ENCODE measurements at regions of chr20 and their contacts with region 1.

Region 1: GRCh38 chr20:43448748-43449535 is 8.8 kb upstream of the SRSF6 start:
- DNase-seq: peak; percentile 72 to 78
- H3K4me3 ChIP-seq: no peak overlapping the region
- H3K4me3 Mint-ChIP-seq: no peak overlapping the region
- H3K27ac Mint-ChIP-seq: no peak overlapping the region
- H3K4me1 ChIP-seq: no peaks in the 10 kb centered on the region
- H3K4me1 Mint-ChIP-seq: no peaks in the 10 kb centered on the region
- H3K27me3 ChIP-seq: no peaks in the 10 kb centered on the region
- H3K27me3 Mint-ChIP-seq: peaks cover 2% of the 10 kb centered on the region
- CTCF ChIP-seq: peak; percentile 95

Region 2: DNA sequence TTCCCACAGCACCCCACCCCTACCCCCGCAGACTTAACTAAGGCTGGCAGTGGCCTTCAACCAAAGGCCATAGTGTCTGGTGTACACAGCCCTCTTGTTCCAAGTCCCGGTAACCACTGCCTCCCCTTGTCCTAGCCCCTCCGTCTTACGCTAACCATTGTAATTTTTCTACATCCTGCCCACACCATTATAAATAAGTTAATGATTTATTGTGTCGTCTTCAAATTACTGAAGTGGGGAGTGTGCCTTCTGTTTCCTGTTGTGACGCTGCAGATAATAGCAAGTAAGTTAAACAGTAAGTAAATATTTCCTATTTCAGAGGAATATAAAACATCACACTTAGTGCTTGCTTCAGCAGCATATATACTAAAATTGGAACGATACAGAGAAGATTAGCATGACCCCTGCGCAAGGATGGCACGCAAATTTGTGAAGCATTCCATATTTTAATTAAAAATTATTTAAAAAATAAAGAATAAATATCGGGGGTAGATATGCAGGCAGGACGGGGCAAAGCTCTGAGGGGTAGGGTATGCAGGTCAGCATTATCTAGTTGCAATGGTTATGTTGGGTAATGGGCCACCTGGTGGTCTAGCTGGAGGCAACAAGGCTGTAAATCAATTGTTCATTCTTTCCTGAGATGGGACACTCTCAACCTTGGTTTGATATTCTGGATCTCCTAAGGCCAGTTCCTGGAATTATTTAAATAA is 23.9 kb after region 1 on chr20:
- CTCF ChIA-PET with region 1: interaction called, 11 read pairs
- POLR2A ChIA-PET with region 1: no interaction called
- intact Hi-C with region 1: loop called (anchors 1 kb)
- DNase-seq: no peak
- H3K4me3 ChIP-seq: no peak overlapping the region
- H3K4me3 Mint-ChIP-seq: no peak overlapping the region
- H3K27ac Mint-ChIP-seq: no peak overlapping the region
- H3K4me1 ChIP-seq: no peaks in the 10 kb centered on the region
- H3K4me1 Mint-ChIP-seq: no peaks in the 10 kb centered on the region
- H3K27me3 ChIP-seq: no peaks in the 10 kb centered on the region
- H3K27me3 Mint-ChIP-seq: peaks cover 12% of the 10 kb centered on the region
- CTCF ChIP-seq: peak; percentile 45 to 46

Region 3: DNA sequence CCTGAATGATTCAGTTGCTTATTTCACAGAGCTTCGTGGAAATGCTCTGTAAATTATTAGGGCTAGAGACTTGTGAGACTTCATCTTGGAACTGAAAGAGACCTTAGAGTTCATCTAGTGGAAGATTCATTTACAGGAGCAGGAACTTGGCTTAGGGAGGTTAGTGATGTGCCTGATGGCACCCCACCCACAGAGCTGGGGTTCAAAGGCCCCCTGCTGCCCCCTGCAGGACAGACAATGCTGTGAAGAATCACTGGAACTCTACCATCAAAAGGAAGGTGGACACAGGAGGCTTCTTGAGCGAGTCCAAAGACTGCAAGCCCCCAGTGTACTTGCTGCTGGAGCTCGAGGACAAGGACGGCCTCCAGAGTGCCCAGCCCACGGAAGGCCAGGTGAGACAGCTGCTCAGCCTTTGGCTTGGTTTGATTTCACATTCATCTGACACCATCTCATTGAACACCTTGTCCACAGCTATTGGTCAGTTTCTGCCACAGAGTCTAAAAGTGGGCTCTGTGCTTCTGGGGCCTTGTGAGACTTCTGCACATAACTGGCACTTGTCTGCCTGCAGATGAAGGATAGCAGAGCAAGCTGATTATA is 243.1 kb after region 1 on chr20:
- CTCF ChIA-PET with region 1: interaction called, 20 read pairs
- POLR2A ChIA-PET with region 1: no interaction called
- intact Hi-C with region 1: loop called (anchors 1 kb)
- DNase-seq: peak; percentile 80 to 88
- H3K4me3 ChIP-seq: no peak overlapping the region
- H3K4me3 Mint-ChIP-seq: no peak overlapping the region
- H3K27ac Mint-ChIP-seq: no peak overlapping the region
- H3K4me1 ChIP-seq: no peaks in the 10 kb centered on the region
- H3K4me1 Mint-ChIP-seq: peaks cover 4% of the 10 kb centered on the region
- H3K27me3 ChIP-seq: no peaks in the 10 kb centered on the region
- H3K27me3 Mint-ChIP-seq: no peaks in the 10 kb centered on the region
- CTCF ChIP-seq: peak; percentile 95

Measured in Caco-2 (cell line).